ENCODE measurements at regions of chr12 and their contacts with region 1.

Region 1: DNA sequence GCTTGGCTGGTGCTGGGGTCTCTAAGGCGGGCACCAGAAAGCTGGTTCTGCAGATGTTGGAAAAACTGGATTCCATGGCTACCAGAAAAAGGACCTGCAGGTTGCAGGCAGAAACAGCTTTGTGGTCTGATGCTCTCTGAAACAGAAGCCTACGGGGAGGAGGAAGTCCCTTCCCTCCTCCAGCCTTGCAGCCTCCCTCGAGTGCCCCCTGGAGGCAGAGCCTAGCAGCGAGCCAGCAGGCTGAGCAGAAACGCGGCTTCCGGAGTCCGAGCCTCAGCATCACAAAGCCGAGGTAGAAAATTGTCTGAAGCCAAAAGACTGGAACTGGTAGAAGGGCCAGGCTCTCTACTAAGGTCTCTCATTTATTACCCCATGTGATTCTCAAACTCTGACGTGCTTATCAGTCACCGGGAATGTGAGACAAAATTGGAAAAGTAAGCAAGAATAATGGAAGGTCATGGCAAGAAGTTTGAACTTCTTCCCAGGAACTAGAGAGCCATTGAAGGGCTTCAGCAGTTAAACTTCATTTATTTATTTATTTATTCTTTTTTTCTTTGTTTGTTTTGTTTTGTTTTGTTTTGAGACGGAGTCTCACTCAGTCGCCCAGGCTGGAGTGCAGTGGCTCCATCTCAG is 82.2 kb upstream of the CPSF6 start:
- DNase-seq: peak; percentile 71 to 89 (median 76)
- ATAC-seq: peak; percentile 97
- H3K4me3 ChIP-seq: no peak overlapping the region
- H3K27ac ChIP-seq: no peak overlapping the region
- H3K4me1 ChIP-seq: peaks cover 0 to 4% of the 10 kb centered on the region in 2 experiments; a peak in 1 of 5 replicates
- H3K27me3 ChIP-seq: peaks cover 0 to 7% of the 10 kb centered on the region in 2 experiments; a peak in 1 of 5 replicates
- CTCF ChIP-seq: peak; percentile 90 to 97 (median 92)
- EP300 ChIP-seq: no peak
- POLR2A ChIP-seq: no peak
- RAD21 ChIP-seq: peak; percentile 55 to 65

Region 2: GRCh38 chr12:69254046-69254445 is 96.9 kb after region 1 on chr12:
- CTCF ChIA-PET with region 1: interaction called, 31 read pairs
- POLR2A ChIA-PET with region 1: no interaction called
- in situ Hi-C with region 1: no loop called
- intact Hi-C with region 1: loop called (anchors 1 kb)
- DNase-seq: peak; percentile 27 to 62 (median 32)
- ATAC-seq: peak; percentile 77
- H3K4me3 ChIP-seq: no peak overlapping the region
- H3K27ac ChIP-seq: no peak overlapping the region
- H3K4me1 ChIP-seq: no peaks in the 10 kb centered on the region
- H3K27me3 ChIP-seq: no peaks in the 10 kb centered on the region
- CTCF ChIP-seq: peak; percentile 40 to 78 (median 56); a peak in 5 of 6 replicates
- EP300 ChIP-seq: no peak
- POLR2A ChIP-seq: 0 out of 2 replicates have a peak, but pooled peaks have one; percentile 28
- RAD21 ChIP-seq: peak; percentile 72 to 74

Region 3: DNA sequence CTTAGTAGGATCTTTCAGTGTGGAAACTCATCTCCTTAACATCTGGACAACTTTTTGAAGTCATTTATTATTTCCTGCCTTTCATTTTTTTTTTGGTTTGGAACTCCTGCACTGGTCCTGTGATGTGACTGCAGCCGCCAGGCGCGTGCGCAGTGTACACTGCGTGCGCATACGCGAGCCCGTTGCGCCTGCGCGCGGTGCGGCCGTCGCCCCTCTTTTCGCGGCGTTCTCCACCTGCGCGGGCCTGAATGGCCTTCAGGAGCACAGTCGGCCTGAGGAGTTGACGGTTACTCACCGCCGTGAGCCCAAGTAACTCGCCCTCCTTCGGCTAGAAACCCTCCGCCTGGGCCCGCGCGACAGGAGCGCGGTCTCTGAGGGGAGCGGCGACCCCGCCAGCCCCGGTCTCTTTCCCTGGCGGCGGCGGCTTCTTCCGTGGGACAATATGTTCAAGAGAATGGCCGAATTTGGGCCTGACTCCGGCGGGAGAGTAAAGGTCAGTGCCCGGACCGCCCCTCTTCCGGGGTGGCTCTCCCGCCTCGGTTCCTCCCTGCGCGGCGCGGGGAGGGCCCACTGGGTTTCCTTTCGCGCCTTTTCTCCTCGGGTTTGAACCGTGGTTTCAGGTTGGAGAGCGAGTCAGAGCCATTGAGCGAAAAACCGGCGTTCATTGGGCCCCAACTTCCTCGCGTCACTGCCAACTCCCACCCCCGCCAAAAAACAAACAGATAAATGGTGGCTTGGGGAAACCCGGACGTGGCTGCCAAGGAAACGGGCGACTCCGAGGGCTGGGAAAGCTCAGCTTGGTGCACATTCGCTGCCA is 202.6 kb after region 1 on chr12 and contains the start of gene YEATS4:
- CTCF ChIA-PET with region 1: no interaction called
- POLR2A ChIA-PET with region 1: no interaction called
- in situ Hi-C with region 1: no loop called
- intact Hi-C with region 1: loop called (anchors 10 kb)
- DNase-seq: peak; percentile 86 to 95 (median 90)
- ATAC-seq: peak; percentile 94
- H3K4me3 ChIP-seq: peak within 1 kb of the TSS; percentile 52
- H3K27ac ChIP-seq: peak within 1 kb of the TSS; percentile 95
- H3K4me1 ChIP-seq: peaks cover 11 to 14% of the 10 kb centered on the region in 2 experiments; a peak in 4 of 5 replicates
- H3K27me3 ChIP-seq: no peaks in the 10 kb centered on the region
- CTCF ChIP-seq: no peak
- EP300 ChIP-seq: peak; percentile 34; the same call in 1 of the 2 replicates
- POLR2A ChIP-seq: peak; percentile 95
- RAD21 ChIP-seq: no peak
- polyA plus RNA-seq, gene YEATS4: 25.9 to 26.3 TPM

Region 4: GRCh38 chr12:69570545-69571399 is 413.6 kb after region 1 on chr12:
- CTCF ChIA-PET with region 1: interaction called, 3 read pairs
- POLR2A ChIA-PET with region 1: no interaction called
- in situ Hi-C with region 1: no loop called
- intact Hi-C with region 1: loop called (anchors 5 kb)
- DNase-seq: peak; percentile 59 to 76 (median 64)
- ATAC-seq: peak; percentile 96
- H3K4me3 ChIP-seq: no peak overlapping the region
- H3K27ac ChIP-seq: no peak overlapping the region
- H3K4me1 ChIP-seq: no peaks in the 10 kb centered on the region
- H3K27me3 ChIP-seq: no peaks in the 10 kb centered on the region
- CTCF ChIP-seq: peak; percentile 77 to 87 (median 77)
- EP300 ChIP-seq: no peak
- POLR2A ChIP-seq: no peak
- RAD21 ChIP-seq: peak; percentile 84